ENCODE measurements at regions of chr6 and their contacts with region 1.

Region 1: DNA sequence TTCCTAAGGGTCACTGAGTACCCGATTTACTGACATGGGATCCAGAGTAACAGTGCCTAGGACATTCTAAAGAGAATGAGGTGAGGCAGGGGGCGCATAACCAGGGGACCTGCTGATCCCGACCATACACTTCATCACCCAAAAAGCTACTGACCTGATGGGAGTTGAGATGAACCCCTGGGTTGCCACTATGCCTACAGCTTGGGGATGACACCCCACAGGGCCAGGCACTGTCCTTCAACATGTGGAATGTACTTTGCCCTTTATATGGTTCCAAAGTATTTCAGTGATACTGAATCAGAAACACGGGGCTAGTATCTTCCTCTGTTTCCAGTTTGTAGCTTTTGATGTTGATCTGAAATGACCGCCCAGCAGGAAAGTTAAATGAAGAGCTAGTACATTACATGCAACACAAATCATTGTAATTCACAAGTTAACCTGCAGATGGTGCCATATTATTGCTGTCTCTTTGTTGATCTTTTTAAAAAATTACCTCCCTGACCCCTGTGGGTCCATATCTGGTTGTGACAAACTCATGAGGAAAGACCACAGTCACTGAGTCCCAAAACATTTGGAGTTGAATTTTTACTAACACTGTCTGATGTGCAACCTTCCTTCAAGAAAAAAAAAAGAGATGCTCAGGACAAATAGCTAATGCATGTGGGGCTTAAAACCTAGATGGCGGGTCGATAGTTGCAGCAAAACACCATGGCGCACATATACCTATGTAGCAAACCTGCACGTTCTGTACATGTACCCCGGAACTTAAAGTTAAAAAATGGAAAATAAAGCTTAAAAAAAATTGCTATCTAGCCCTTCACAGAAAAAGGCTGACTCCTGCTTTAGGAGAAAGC is 42.7 kb upstream of the GCNT2 start:
- DNase-seq: no peak
- ATAC-seq: peak; percentile 87
- H3K4me3 ChIP-seq: no peak overlapping the region
- H3K27ac ChIP-seq: no peak overlapping the region
- H3K4me1 ChIP-seq: no peaks in the 10 kb centered on the region
- H3K27me3 ChIP-seq: no peaks in the 10 kb centered on the region; a peak in 2 of 4 replicates
- CTCF ChIP-seq: peak; percentile 55 to 65 (median 62); a peak in 5 of 6 replicates
- EP300 ChIP-seq: no peak
- POLR2A ChIP-seq: no peak
- RAD21 ChIP-seq: peak; percentile 81

Region 2: GRCh38 chr6:10373642-10374359 is 104.6 kb before region 1 on chr6:
- CTCF ChIA-PET with region 1: no interaction called
- POLR2A ChIA-PET with region 1: no interaction called
- RAD21 ChIA-PET with region 1: no interaction called
- SMC1A ChIA-PET with region 1: no interaction called
- in situ Hi-C with region 1: no loop called
- intact Hi-C with region 1: no loop called
- DNase-seq: no peak
- ATAC-seq: no peak
- H3K4me3 ChIP-seq: no peak overlapping the region
- H3K27ac ChIP-seq: no peak overlapping the region
- H3K4me1 ChIP-seq: no peaks in the 10 kb centered on the region
- H3K27me3 ChIP-seq: no peaks in the 10 kb centered on the region; a peak in 1 of 4 replicates
- CTCF ChIP-seq: no peak
- EP300 ChIP-seq: no peak
- POLR2A ChIP-seq: no peak
- RAD21 ChIP-seq: no peak

Region 3: DNA sequence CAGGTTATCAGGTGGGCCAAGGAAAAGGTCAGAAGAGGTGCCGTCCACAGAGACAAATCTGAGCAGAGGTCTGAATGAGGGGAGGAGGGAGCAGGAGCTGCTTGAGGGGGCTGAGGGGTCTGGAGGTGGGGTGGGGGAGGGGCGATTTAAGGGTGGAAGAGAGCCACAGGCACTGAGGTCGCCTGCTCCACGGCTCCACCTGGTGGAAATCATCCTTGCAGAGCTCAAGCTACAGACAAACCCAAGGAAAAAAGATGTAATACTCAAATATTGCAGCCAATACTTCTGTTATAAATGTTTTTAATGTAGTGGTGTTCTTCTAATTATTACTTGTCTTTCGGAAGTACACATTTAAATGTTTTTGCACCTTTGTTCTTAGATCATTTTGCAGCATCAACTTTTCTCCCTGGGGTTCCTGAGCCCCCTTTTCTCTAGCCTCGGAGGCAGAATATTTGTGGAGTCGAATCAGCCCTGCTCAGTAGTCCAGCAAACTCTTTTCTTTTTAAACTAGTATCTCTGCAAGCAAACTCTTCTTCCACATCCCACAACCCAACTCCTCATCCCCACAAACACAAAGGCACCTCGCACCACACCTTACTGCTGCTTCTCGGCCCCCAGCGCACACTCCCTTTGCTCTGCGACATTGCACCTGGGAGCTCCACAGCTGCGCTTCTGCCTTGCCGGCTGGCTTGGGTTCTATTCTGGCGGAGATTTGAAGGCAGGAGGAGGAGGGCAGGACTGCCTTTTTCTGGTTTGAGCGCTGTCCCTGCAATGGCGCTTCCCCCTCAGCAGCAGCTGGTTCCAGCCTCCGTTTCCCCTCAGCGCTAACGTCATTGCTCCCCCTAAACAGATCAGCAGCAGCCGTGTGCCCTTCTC is 12.5 kb before region 1 on chr6:
- CTCF ChIA-PET with region 1: interaction called, 22 read pairs
- POLR2A ChIA-PET with region 1: no interaction called
- RAD21 ChIA-PET with region 1: interaction called, 12 read pairs
- SMC1A ChIA-PET with region 1: interaction called, 8 read pairs
- in situ Hi-C with region 1: no loop called
- intact Hi-C with region 1: no loop called
- DNase-seq: no peak
- ATAC-seq: peak; percentile 69
- H3K4me3 ChIP-seq: no peak overlapping the region
- H3K27ac ChIP-seq: no peak overlapping the region
- H3K4me1 ChIP-seq: peaks cover under 1% of the 10 kb centered on the region; the same call in 1 of the 2 replicates
- H3K27me3 ChIP-seq: no peaks in the 10 kb centered on the region; a peak in 1 of 4 replicates
- CTCF ChIP-seq: peak; percentile 48 to 73 (median 59)
- EP300 ChIP-seq: no peak
- POLR2A ChIP-seq: no peak
- RAD21 ChIP-seq: peak; percentile 44

Region 4: DNA sequence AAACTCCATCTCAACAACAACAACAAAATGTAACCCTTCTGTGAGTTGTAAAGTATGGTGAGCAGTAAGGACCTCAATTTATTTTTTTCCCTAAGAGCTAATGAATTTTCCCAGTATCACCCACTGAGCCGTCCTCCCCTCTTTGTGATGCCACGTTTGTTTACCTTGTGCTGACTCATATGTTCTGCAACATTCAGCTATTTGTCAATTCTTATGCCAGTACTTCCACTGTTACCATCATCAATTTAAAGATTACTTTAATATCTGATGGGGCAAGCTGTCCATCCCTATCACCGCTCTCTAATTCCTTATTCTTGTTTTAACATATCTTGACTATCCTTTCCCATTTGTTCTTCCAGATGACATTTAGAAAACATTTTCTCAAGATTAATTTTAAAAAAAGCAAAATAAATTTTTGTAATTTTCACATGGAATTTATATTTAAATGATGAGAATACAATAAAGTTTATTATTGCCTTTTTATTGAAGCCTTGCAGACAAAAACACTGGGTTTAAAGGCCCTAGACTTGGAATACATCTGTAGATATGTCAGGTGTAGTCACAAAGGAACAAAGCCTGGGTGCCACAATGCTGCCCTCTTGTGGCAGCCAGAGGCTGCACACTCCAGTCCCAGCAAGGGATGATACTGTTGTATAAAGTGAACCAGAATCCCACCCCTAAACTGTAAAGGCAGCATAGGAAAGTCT is 322.6 kb after region 1 on chr6:
- CTCF ChIA-PET with region 1: interaction called, 153 read pairs
- POLR2A ChIA-PET with region 1: no interaction called
- RAD21 ChIA-PET with region 1: interaction called, 22 read pairs
- SMC1A ChIA-PET with region 1: interaction called, 38 read pairs
- in situ Hi-C with region 1: loop called (anchors 5 kb)
- intact Hi-C with region 1: loop called (anchors 1 kb)
- DNase-seq: no peak
- ATAC-seq: peak; percentile 100
- H3K4me3 ChIP-seq: no peak overlapping the region
- H3K27ac ChIP-seq: no peak overlapping the region
- H3K4me1 ChIP-seq: no peaks in the 10 kb centered on the region
- H3K27me3 ChIP-seq: no peaks in the 10 kb centered on the region
- CTCF ChIP-seq: peak; percentile 98 to 99 (median 99); a peak in 5 of 6 replicates
- EP300 ChIP-seq: no peak
- POLR2A ChIP-seq: no peak
- RAD21 ChIP-seq: peak; percentile 94

Measured in GM12878 (cell line).